Caco-2 (cell line): ENCODE measurements at regions of chr5 and their contacts with region 1.

Region 1: GRCh38 chr5:129904102-129904666 is at the start of gene CHSY3:
- DNase-seq: peak; percentile 68 to 70
- H3K4me3 ChIP-seq: peak within 1 kb of the TSS; percentile 67
- H3K4me3 Mint-ChIP-seq: peak within 1 kb of the TSS; percentile 88
- H3K27ac Mint-ChIP-seq: peak within 1 kb of the TSS; percentile 39
- H3K4me1 ChIP-seq: peaks cover 15% of the 10 kb centered on the region
- H3K4me1 Mint-ChIP-seq: peaks cover 15% of the 10 kb centered on the region
- H3K27me3 ChIP-seq: no peaks in the 10 kb centered on the region; the same call in none of the 2 replicates
- H3K27me3 Mint-ChIP-seq: peaks cover 27% of the 10 kb centered on the region
- CTCF ChIP-seq: no peak
- total RNA-seq, gene CHSY3: 0.32 and 0.46 TPM in 2 replicates

Region 2: DNA sequence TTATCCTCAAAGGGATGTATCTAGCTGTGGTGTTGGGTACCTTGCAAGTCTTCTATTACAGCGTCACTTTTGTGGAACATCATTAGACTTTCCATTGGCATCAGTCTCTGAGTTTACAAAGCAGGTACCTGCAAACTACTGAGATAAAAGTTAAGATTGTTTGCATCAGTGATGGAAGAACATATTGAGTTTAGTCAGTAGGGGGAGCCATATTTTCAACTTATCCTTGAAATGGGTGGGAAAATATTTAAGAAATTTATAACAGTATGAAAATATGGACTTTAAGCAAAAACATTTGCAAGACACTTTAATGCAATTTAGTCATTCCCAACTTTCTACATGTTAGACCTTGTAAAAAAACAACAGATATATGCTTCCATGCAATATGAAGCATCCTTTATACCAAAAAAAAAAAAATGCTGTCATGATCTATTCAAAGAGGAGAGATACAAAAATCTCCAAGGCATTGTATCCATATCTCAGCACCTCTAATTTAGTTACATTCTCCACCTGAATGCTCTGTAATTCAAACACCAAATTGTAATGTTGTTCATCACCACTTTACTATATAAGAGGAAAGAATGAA is 542.7 kb before region 1 on chr5:
- CTCF ChIA-PET with region 1: no interaction called
- POLR2A ChIA-PET with region 1: no interaction called
- intact Hi-C with region 1: no loop called
- DNase-seq: peak in 1 of 2 experiments; percentile 12
- H3K4me3 ChIP-seq: no peak overlapping the region
- H3K4me3 Mint-ChIP-seq: no peak overlapping the region
- H3K27ac Mint-ChIP-seq: no peak overlapping the region
- H3K4me1 ChIP-seq: no peaks in the 10 kb centered on the region
- H3K4me1 Mint-ChIP-seq: no peaks in the 10 kb centered on the region
- H3K27me3 ChIP-seq: no peaks in the 10 kb centered on the region
- H3K27me3 Mint-ChIP-seq: no peaks in the 10 kb centered on the region
- CTCF ChIP-seq: peak; percentile 47 to 64

Region 3: DNA sequence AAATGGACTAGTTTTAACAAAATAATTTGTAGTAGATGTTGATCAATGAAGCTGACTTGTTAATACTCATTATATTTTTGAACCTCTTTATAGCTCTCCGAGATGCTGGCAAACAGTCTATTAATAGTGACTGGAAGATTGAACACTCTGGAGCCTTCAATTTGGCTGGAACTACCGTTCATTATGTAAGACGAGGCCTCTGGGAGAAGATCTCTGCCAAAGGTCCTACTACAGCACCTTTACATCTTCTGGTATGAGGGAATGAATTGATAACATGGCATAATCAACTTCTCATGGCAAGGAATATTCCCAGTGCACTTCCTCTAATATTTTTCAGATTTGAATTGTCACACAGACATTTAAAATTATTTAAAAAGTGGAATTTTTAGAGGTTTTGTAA is 224.5 kb before region 1 on chr5:
- CTCF ChIA-PET with region 1: no interaction called
- POLR2A ChIA-PET with region 1: no interaction called
- intact Hi-C with region 1: no loop called
- DNase-seq: no peak
- H3K4me3 ChIP-seq: no peak overlapping the region
- H3K4me3 Mint-ChIP-seq: no peak overlapping the region
- H3K27ac Mint-ChIP-seq: no peak overlapping the region
- H3K4me1 ChIP-seq: no peaks in the 10 kb centered on the region
- H3K4me1 Mint-ChIP-seq: no peaks in the 10 kb centered on the region
- H3K27me3 ChIP-seq: no peaks in the 10 kb centered on the region
- H3K27me3 Mint-ChIP-seq: peaks cover 3% of the 10 kb centered on the region
- CTCF ChIP-seq: no peak

Region 4: DNA sequence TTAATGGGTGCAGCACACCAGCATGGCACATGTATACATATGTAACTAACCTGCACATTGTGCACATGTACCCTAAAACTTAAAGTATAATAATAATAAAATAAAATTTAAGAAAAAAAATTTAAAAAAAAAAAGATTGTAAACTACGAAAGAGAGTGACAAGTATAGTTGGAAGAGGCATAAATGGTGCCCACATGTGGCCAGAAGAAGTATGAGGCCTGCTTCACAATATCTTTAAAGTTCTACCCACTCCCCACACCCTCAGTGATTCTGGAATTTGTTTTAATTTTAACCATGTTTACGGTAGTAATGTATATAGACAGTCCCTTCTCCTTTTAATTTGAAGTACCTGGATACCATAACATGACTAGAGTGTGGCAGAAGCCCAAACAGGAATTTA is 172.8 kb after region 1 on chr5:
- CTCF ChIA-PET with region 1: no interaction called
- POLR2A ChIA-PET with region 1: no interaction called
- intact Hi-C with region 1: loop called (anchors 10 kb)
- DNase-seq: no peak
- H3K4me3 ChIP-seq: no peak overlapping the region
- H3K4me3 Mint-ChIP-seq: no peak overlapping the region
- H3K27ac Mint-ChIP-seq: no peak overlapping the region
- H3K4me1 ChIP-seq: no peaks in the 10 kb centered on the region
- H3K4me1 Mint-ChIP-seq: no peaks in the 10 kb centered on the region
- H3K27me3 ChIP-seq: no peaks in the 10 kb centered on the region
- H3K27me3 Mint-ChIP-seq: peaks cover 5% of the 10 kb centered on the region
- CTCF ChIP-seq: peak in 1 of 2 experiments; percentile 11

Region 5: GRCh38 chr5:130141659-130142320 is 237.6 kb after region 1 on chr5:
- CTCF ChIA-PET with region 1: no interaction called
- POLR2A ChIA-PET with region 1: no interaction called
- intact Hi-C with region 1: loop called (anchors 1 kb)
- DNase-seq: peak; percentile 52 to 67
- H3K4me3 ChIP-seq: no peak overlapping the region
- H3K4me3 Mint-ChIP-seq: no peak overlapping the region
- H3K27ac Mint-ChIP-seq: no peak overlapping the region
- H3K4me1 ChIP-seq: no peaks in the 10 kb centered on the region
- H3K4me1 Mint-ChIP-seq: no peaks in the 10 kb centered on the region
- H3K27me3 ChIP-seq: no peaks in the 10 kb centered on the region
- H3K27me3 Mint-ChIP-seq: no peaks in the 10 kb centered on the region
- CTCF ChIP-seq: peak; percentile 48 to 89

Region 6: DNA sequence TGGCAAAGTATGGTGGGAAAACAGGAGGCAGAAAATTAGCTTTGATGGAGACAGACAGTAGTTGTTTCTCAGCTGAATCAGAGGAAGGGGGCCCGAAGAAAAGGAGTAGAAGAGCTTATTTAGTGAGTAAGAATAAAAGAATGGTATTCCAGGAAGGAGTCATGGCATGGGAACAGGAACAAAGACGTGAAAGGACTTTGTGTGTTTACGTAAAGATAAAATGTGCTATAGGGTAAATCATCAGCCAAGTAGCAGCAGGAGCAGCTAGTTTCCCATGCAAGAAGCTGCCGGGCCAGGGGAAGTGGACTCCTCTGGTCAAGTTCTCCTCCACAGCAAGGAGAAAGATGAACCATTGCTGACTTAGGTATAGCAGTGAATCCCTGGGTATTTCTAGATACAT is 806.4 kb after region 1 on chr5:
- CTCF ChIA-PET with region 1: no interaction called
- POLR2A ChIA-PET with region 1: no interaction called
- intact Hi-C with region 1: loop called (anchors 10 kb)
- DNase-seq: peak; percentile 44 to 62
- H3K4me3 ChIP-seq: no peak overlapping the region
- H3K4me3 Mint-ChIP-seq: peak overlapping the region; percentile 41
- H3K27ac Mint-ChIP-seq: peak overlapping the region; percentile 20
- H3K4me1 ChIP-seq: peaks cover 16% of the 10 kb centered on the region
- H3K4me1 Mint-ChIP-seq: peaks cover 15% of the 10 kb centered on the region
- H3K27me3 ChIP-seq: no peaks in the 10 kb centered on the region
- H3K27me3 Mint-ChIP-seq: no peaks in the 10 kb centered on the region
- CTCF ChIP-seq: no peak